Sigmoid colon (tissue), 7 donors: ENCODE measurements at regions of chr13 and their contacts with region 1.

Region 1: GRCh38 chr13:43878892-43879754 is at the start of gene CCDC122:
- DNase-seq: peak; percentile 91
- H3K4me3 ChIP-seq: peak within 1 kb of the TSS; percentile 82 to 94 (median 86)
- H3K27ac ChIP-seq: peak within 1 kb of the TSS; percentile 94 to 99 (median 96)
- H3K4me1 ChIP-seq: peaks cover 0 to 22% (median 11%) of the 10 kb centered on the region in 4 donors
- H3K27me3 ChIP-seq: no peaks in the 10 kb centered on the region
- CTCF ChIP-seq: no peak
- EP300 ChIP-seq: no peak
- POLR2A ChIP-seq: peak in 1 of 2 donors; percentile 57
- total RNA-seq, gene CCDC122: 1.2 to 3.9 (median 3.1) TPM

Region 2: GRCh38 chr13:42594970-42595571 is 1284.1 kb before region 1 on chr13:
- intact Hi-C with region 1: loop called (anchors 5 kb)
- DNase-seq: peak; percentile 79
- H3K4me3 ChIP-seq: no peak overlapping the region
- H3K27ac ChIP-seq: no peak overlapping the region
- H3K4me1 ChIP-seq: peaks cover 0 to 14% (median 3%) of the 10 kb centered on the region in 4 donors
- H3K27me3 ChIP-seq: no peaks in the 10 kb centered on the region
- CTCF ChIP-seq: peak; percentile 43 to 84 (median 69)
- EP300 ChIP-seq: no peak
- POLR2A ChIP-seq: no peak

Region 3: GRCh38 chr13:42969558-42970172 is 909.5 kb before region 1 on chr13:
- intact Hi-C with region 1: loop called (anchors 5 kb)
- DNase-seq: peak; percentile 88
- H3K4me3 ChIP-seq: no peak overlapping the region
- H3K27ac ChIP-seq: no peak overlapping the region
- H3K4me1 ChIP-seq: peaks cover 0 to 16% (median 6%) of the 10 kb centered on the region in 4 donors
- H3K27me3 ChIP-seq: no peaks in the 10 kb centered on the region
- CTCF ChIP-seq: peak; percentile 59 to 80 (median 68)
- EP300 ChIP-seq: no peak
- POLR2A ChIP-seq: no peak

Region 4: GRCh38 chr13:43085545-43085944 is 793.6 kb before region 1 on chr13:
- intact Hi-C with region 1: loop called (anchors 5 kb)
- DNase-seq: no peak
- H3K4me3 ChIP-seq: no peak overlapping the region
- H3K27ac ChIP-seq: no peak overlapping the region
- H3K4me1 ChIP-seq: peaks cover 0 to 19% (median 12%) of the 10 kb centered on the region in 4 donors
- H3K27me3 ChIP-seq: no peaks in the 10 kb centered on the region
- CTCF ChIP-seq: peak; percentile 58 to 71 (median 63)
- EP300 ChIP-seq: no peak
- POLR2A ChIP-seq: no peak

Region 5: GRCh38 chr13:43303033-43303729 is 575.9 kb before region 1 on chr13:
- intact Hi-C with region 1: loop called (anchors 10 kb)
- DNase-seq: peak; percentile 80
- H3K4me3 ChIP-seq: no peak overlapping the region
- H3K27ac ChIP-seq: peak overlapping the region; percentile 33 to 75 (median 71)
- H3K4me1 ChIP-seq: peaks cover 0 to 99% (median 76%) of the 10 kb centered on the region in 4 donors
- H3K27me3 ChIP-seq: no peaks in the 10 kb centered on the region
- CTCF ChIP-seq: peak; percentile 33 to 50 (median 42)
- EP300 ChIP-seq: no peak
- POLR2A ChIP-seq: no peak

Region 6: DNA sequence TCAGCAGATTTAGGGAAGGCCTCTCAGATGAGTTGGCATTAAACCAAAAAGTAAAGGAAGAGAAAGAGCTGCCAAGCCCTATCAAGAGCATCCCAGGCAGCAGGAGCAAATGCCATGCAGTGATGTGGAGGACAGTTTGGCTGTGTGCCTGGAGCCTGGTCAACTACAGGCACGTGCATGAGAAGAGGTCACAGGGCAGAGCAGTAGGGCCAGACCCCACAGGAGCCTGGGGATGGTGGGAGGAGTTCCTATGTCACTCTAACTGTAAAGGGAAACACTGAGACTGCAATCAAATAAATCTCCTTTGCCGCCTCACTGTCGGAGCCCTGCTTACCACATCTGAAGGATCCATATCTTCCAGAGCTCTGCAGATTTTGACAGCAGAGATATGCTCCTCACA is 332.9 kb before region 1 on chr13:
- intact Hi-C with region 1: loop called (anchors 10 kb)
- DNase-seq: no peak
- H3K4me3 ChIP-seq: no peak overlapping the region
- H3K27ac ChIP-seq: peak overlapping the region in 1 of 4 donors; percentile 69
- H3K4me1 ChIP-seq: peaks cover 0 to 43% (median 32%) of the 10 kb centered on the region in 4 donors
- H3K27me3 ChIP-seq: no peaks in the 10 kb centered on the region
- CTCF ChIP-seq: no peak
- EP300 ChIP-seq: no peak
- POLR2A ChIP-seq: no peak